ENCODE measurements at regions of chr7 and their contacts with region 1.

Region 1: GRCh38 chr7:22743014-22743413 is 16.0 kb downstream of the IL6 start:
- DNase-seq: no peak
- H3K4me3 ChIP-seq: no peak overlapping the region
- H3K27ac ChIP-seq: no peak overlapping the region
- H3K4me1 ChIP-seq: no peaks in the 10 kb centered on the region
- H3K27me3 ChIP-seq: no peaks in the 10 kb centered on the region
- CTCF ChIP-seq: no peak
- POLR2A ChIP-seq: no peak

Region 2: DNA sequence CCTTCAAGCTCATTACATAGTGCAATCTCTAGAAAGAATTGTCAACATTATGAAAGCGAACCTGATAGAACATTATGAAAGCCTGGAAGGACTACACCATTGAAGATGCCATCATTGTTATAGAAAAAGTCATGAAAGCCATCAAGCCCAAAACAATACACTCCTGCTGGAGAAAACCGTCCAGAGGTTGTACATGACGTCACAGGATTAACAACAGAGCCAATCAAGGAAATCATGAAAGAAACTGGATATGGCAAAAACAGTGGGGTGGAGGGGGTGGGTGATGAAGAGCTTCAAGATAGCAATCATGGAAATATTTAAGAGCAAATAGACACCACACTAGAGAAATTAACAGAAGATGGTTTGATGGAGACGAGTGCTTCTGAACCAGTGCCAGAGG is 34.0 kb after region 1 on chr7:
- CTCF ChIA-PET with region 1: interaction called, 5 read pairs
- POLR2A ChIA-PET with region 1: no interaction called
- dilution Hi-C with region 1: no loop called
- intact Hi-C with region 1: loop called (anchors 1 kb)
- DNase-seq: no peak
- H3K4me3 ChIP-seq: no peak overlapping the region
- H3K27ac ChIP-seq: no peak overlapping the region
- H3K4me1 ChIP-seq: no peaks in the 10 kb centered on the region
- H3K27me3 ChIP-seq: no peaks in the 10 kb centered on the region
- CTCF ChIP-seq: no peak
- POLR2A ChIP-seq: no peak